ENCODE measurements at regions of chr14 and their contacts with region 1.

Region 1: GRCh38 chr14:100850841-100851585 is 25.1 kb downstream of the MEG3 start:
- DNase-seq: peak; percentile 57 to 63 (median 61)
- H3K4me3 ChIP-seq: no peak overlapping the region
- H3K4me3 Mint-ChIP-seq: no peak overlapping the region
- H3K27ac ChIP-seq: no peak overlapping the region
- H3K27ac Mint-ChIP-seq: no peak overlapping the region
- H3K4me1 ChIP-seq: peaks cover 6 to 8% of the 10 kb centered on the region in 2 donors
- H3K4me1 Mint-ChIP-seq: no peaks in the 10 kb centered on the region
- H3K27me3 ChIP-seq: no peaks in the 10 kb centered on the region
- H3K27me3 Mint-ChIP-seq: peaks cover 0 to 3% (median 2%) of the 10 kb centered on the region in 3 donors
- CTCF ChIP-seq: peak; percentile 92

Region 2: GRCh38 chr14:100709289-100710284 is 141.4 kb before region 1 on chr14:
- intact Hi-C with region 1: no loop called
- DNase-seq: peak in 2 of 3 donors; percentile 21 to 23
- H3K4me3 ChIP-seq: peak overlapping the region in 1 of 3 experiments; percentile 48
- H3K4me3 Mint-ChIP-seq: peak overlapping the region; percentile 61 to 80
- H3K27ac ChIP-seq: no peak overlapping the region
- H3K27ac Mint-ChIP-seq: no peak overlapping the region
- H3K4me1 ChIP-seq: peaks cover 38 to 42% of the 10 kb centered on the region in 2 donors
- H3K4me1 Mint-ChIP-seq: peaks cover 47% of the 10 kb centered on the region
- H3K27me3 ChIP-seq: no peaks in the 10 kb centered on the region
- H3K27me3 Mint-ChIP-seq: peaks cover 3 to 5% (median 4%) of the 10 kb centered on the region in 3 donors
- CTCF ChIP-seq: peak; percentile 92

Region 3: GRCh38 chr14:101235335-101236103 is 384.5 kb after region 1 on chr14:
- intact Hi-C with region 1: loop called (anchors 2 kb)
- DNase-seq: peak; percentile 21 to 40 (median 24)
- H3K4me3 ChIP-seq: no peak overlapping the region
- H3K4me3 Mint-ChIP-seq: no peak overlapping the region
- H3K27ac ChIP-seq: no peak overlapping the region
- H3K27ac Mint-ChIP-seq: no peak overlapping the region
- H3K4me1 ChIP-seq: no peaks in the 10 kb centered on the region
- H3K4me1 Mint-ChIP-seq: no peaks in the 10 kb centered on the region
- H3K27me3 ChIP-seq: no peaks in the 10 kb centered on the region
- H3K27me3 Mint-ChIP-seq: peaks cover 0 to 7% (median 4%) of the 10 kb centered on the region in 3 donors
- CTCF ChIP-seq: peak; percentile 81

Region 4: GRCh38 chr14:101628471-101628966 is 777.5 kb after region 1 on chr14:
- intact Hi-C with region 1: loop called (anchors 1 to 2 kb)
- DNase-seq: peak; percentile 38 to 57 (median 51)
- H3K4me3 ChIP-seq: peak overlapping the region in 1 of 3 experiments; percentile 32
- H3K4me3 Mint-ChIP-seq: peak overlapping the region in 1 of 2 donors; percentile 37
- H3K27ac ChIP-seq: no peak overlapping the region
- H3K27ac Mint-ChIP-seq: no peak overlapping the region
- H3K4me1 ChIP-seq: peaks cover 9 to 13% of the 10 kb centered on the region in 2 donors
- H3K4me1 Mint-ChIP-seq: peaks cover 6% of the 10 kb centered on the region
- H3K27me3 ChIP-seq: no peaks in the 10 kb centered on the region
- H3K27me3 Mint-ChIP-seq: peaks cover 6 to 11% (median 9%) of the 10 kb centered on the region in 3 donors
- CTCF ChIP-seq: peak; percentile 98